ENCODE measurements at regions of chr2 and their contacts with region 1.

Region 1: GRCh38 chr2:74334931-74335333 is 8.3 kb downstream of the SLC4A5 start:
- DNase-seq: peak; percentile 66 to 88 (median 74)
- H3K4me3 ChIP-seq: no peak overlapping the region
- H3K27ac ChIP-seq: peak overlapping the region in 1 of 59 donors; percentile 79
- H3K27me3 ChIP-seq: no peaks in the 10 kb centered on the region
- CTCF ChIP-seq: peak; percentile 66 to 97 (median 92)

Region 2: DNA sequence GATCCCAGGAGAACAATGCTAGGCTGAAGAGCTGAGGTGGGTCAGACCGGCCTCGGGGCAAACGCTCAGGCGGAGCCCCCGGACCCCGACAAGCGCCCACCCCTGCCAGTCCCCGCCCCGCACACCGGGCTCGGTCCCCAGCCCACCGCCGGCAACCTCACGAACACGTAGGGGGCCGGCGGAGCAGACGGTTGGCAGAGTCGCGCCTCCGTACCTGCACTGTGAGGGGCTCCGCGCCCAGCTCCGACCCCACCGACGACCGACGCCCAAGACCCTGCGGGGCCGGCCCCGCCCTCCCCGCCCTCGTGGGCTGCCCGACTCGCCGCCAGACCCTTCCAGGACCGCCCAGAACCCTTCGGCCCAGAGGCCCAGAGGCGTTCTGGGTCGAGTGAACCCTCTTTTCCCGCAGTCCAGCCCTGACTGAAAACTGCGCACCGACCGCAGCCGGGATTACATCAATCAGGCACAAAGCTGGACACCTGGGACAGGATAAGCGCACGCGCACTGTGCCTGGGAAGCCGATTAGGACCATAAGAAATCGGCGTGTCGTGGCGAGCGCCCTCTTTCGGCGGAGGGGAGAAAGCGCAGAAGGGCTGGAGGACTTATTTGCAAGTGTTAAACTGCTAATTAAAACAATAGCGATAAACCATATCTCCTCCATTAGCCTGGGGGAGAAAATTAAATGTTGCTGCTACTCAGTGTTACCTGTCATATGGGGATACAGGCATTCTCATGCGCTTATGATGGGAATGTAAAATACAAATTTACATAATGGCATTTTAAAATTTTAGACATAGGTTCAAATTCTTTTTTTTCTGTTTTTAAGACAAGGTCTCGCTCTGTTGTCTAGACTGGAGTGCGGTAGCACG is 56.9 kb after region 1 on chr2:
- intact Hi-C with region 1: loop called in 1 of 2 experiments (anchors 2 kb)
- DNase-seq: peak; percentile 84 to 93 (median 90)
- H3K4me3 ChIP-seq: peak overlapping the region; percentile 55 to 95 (median 84)
- H3K27ac ChIP-seq: peak overlapping the region; percentile 55 to 98 (median 94)
- H3K27me3 ChIP-seq: no peaks in the 10 kb centered on the region
- CTCF ChIP-seq: peak; percentile 93 to 100 (median 98)

Region 3: GRCh38 chr2:74436798-74437695 is 102.1 kb after region 1 on chr2:
- intact Hi-C with region 1: no loop called
- DNase-seq: peak in 1 of 10 donors; percentile 32
- H3K4me3 ChIP-seq: peak overlapping the region in 55 of 59 donors; percentile 10 to 91 (median 64)
- H3K27ac ChIP-seq: peak overlapping the region in 48 of 59 donors; percentile 5 to 99 (median 92)
- H3K27me3 ChIP-seq: peaks cover 0 to 21% (median 7%) of the 10 kb centered on the region in 45 donors
- CTCF ChIP-seq: no peak

Region 4: GRCh38 chr2:74507145-74507925 is 172.4 kb after region 1 on chr2 and contains the start of gene PCGF1:
- intact Hi-C with region 1: no loop called
- DNase-seq: peak; percentile 91 to 99 (median 98)
- H3K4me3 ChIP-seq: peak within 1 kb of the TSS; percentile 56 to 98 (median 86)
- H3K27ac ChIP-seq: peak within 1 kb of the TSS; percentile 91 to 100 (median 99)
- H3K27me3 ChIP-seq: peaks cover 0 to 57% (median 39%) of the 10 kb centered on the region in 45 donors
- CTCF ChIP-seq: peak in 45 of 56 donors; percentile 6 to 59 (median 37)
- total RNA-seq, gene PCGF1: 12.1 to 39.8 (median 22.4) TPM

Region 5: GRCh38 chr2:74715078-74715791 is 380.3 kb after region 1 on chr2:
- intact Hi-C with region 1: no loop called
- DNase-seq: peak; percentile 58 to 82 (median 74)
- H3K4me3 ChIP-seq: peak overlapping the region; percentile 46 to 92 (median 66)
- H3K27ac ChIP-seq: peak overlapping the region in 4 of 59 donors; percentile 28 to 67 (median 41)
- H3K27me3 ChIP-seq: peaks cover 0 to 17% (median 0%) of the 10 kb centered on the region in 45 donors
- CTCF ChIP-seq: peak; percentile 56 to 98 (median 93)

Region 6: DNA sequence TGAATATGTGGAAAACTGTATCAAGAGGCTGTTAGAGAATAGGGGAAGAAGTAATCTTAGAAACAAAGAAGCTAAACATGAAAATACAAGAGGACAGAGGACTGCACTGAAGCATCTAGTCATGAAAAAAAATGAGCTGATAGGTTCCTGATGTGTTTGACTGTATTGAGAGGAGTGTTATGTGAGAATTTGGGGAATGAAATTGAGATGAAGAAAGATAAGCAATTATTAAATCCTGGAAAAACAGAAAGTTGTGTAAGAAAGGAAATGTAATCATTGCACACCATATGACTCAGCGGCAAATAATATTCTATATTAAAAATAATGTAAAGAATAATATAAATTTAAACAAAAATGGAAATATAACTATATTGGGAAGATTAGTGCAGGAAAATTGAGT is 390.4 kb after region 1 on chr2:
- intact Hi-C with region 1: no loop called
- DNase-seq: no peak
- H3K4me3 ChIP-seq: no peak overlapping the region
- H3K27ac ChIP-seq: no peak overlapping the region
- H3K27me3 ChIP-seq: peaks cover 0 to 9% (median 0%) of the 10 kb centered on the region in 45 donors
- CTCF ChIP-seq: no peak